ENCODE measurements at regions of chr10 and their contacts with region 1.

Region 1: GRCh38 chr10:10421071-10421470 is 596.6 kb upstream of the CELF2 start:
- DNase-seq: no peak
- ATAC-seq: no peak
- H3K4me3 ChIP-seq: no peak overlapping the region
- H3K27ac ChIP-seq: no peak overlapping the region
- H3K4me1 ChIP-seq: no peaks in the 10 kb centered on the region
- H3K27me3 ChIP-seq: no peaks in the 10 kb centered on the region
- CTCF ChIP-seq: no peak

Region 2: GRCh38 chr10:9579110-9579705 is 841.9 kb before region 1 on chr10:
- CTCF ChIA-PET with region 1: no interaction called
- POLR2A ChIA-PET with region 1: no interaction called
- in situ Hi-C with region 1: no loop called
- intact Hi-C with region 1: no loop called
- DNase-seq: no peak
- ATAC-seq: no peak
- H3K4me3 ChIP-seq: no peak overlapping the region
- H3K27ac ChIP-seq: no peak overlapping the region
- H3K4me1 ChIP-seq: no peaks in the 10 kb centered on the region
- H3K27me3 ChIP-seq: no peaks in the 10 kb centered on the region
- CTCF ChIP-seq: no peak

Region 3: DNA sequence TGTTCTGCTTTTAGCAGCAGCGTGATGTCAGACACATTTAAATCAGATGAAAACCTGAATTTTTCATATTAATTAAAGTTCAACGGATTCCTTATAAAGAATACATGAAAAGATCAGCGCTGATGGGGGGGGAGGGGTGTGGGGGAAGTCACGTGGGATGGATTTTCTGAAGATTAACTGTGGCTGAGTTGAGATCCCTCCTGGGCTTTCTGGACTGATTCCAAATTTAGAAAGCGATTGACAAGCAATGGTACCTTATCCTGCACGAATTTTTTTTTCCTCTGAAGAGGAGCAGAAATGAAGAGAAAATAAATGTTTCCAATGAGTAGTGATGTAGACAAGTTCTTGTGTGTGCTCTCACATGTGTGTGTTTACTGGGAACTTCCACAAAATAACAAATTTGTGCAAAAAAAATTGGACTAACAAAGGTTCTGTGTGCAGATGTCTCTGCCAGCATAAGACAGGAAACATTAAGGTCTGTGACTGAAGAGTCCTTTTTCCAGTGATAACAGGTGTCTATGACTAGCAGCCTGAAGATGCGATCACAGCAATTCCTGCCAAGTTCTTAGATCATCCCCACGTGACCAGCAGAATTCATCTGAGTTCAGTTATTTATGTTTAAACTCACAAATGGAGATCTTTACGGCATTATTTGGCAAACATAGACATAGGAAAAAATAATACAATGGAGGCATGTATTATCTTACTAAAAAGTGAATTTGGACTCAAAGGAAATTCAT is 11.4 kb after region 1 on chr10:
- CTCF ChIA-PET with region 1: no interaction called
- POLR2A ChIA-PET with region 1: no interaction called
- in situ Hi-C with region 1: no loop called
- intact Hi-C with region 1: loop called (anchors 1 kb)
- DNase-seq: no peak
- ATAC-seq: no peak
- H3K4me3 ChIP-seq: no peak overlapping the region
- H3K27ac ChIP-seq: no peak overlapping the region
- H3K4me1 ChIP-seq: no peaks in the 10 kb centered on the region
- H3K27me3 ChIP-seq: no peaks in the 10 kb centered on the region
- CTCF ChIP-seq: no peak